CD8-positive, alpha-beta memory T cell (primary cell): ENCODE measurements at regions of chr19 and their contacts with region 1.

Region 1: GRCh38 chr19:17703824-17704463 is 15.3 kb upstream of the MAP1S start:
- DNase-seq: peak; percentile 59 to 75 (median 66)
- H3K4me3 ChIP-seq: no peak overlapping the region
- H3K4me3 Mint-ChIP-seq: no peak overlapping the region
- H3K27ac ChIP-seq: no peak overlapping the region
- H3K27ac Mint-ChIP-seq: peak overlapping the region in 1 of 8 donors; percentile 29
- H3K4me1 ChIP-seq: no peaks in the 10 kb centered on the region
- H3K4me1 Mint-ChIP-seq: peaks cover 0 to 4% (median 2%) of the 10 kb centered on the region in 3 donors
- H3K27me3 ChIP-seq: peaks cover 2% of the 10 kb centered on the region
- H3K27me3 Mint-ChIP-seq: peaks cover 3 to 16% of the 10 kb centered on the region in 2 donors

Region 2: DNA sequence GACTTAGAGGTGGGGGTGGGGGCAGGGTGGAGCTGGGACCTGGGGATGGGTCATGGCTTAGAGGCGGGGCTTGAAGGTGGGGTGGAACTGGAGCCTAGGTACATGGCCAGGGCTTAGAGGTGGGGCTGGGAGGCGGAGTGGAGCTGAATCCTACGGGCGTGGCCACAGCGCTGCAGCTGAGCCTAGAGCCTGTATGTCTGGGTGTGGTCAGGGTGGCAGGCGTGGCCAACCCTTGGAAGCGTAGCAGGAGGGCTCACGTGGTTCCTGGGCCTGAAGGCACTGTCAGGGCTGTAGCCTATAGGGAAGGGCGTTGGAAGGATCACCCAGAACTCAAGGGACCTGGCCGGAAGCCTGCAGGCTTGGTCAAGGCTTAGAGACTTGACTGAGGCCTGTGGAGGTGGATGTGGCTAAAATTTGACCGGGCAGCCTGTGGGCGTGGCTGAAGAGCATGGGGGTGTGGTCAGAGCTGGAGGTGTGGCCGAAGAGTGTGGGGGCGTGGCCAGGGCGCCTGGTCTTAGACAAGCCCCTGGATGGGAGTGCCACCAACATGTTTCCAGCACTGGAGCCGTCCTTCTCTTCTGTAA is 124.2 kb before region 1 on chr19:
- CTCF ChIA-PET with region 1: no interaction called
- POLR2A ChIA-PET with region 1: no interaction called
- DNase-seq: no peak
- H3K4me3 ChIP-seq: no peak overlapping the region
- H3K4me3 Mint-ChIP-seq: no peak overlapping the region
- H3K27ac ChIP-seq: no peak overlapping the region
- H3K27ac Mint-ChIP-seq: no peak overlapping the region
- H3K4me1 ChIP-seq: no peaks in the 10 kb centered on the region
- H3K4me1 Mint-ChIP-seq: no peaks in the 10 kb centered on the region
- H3K27me3 ChIP-seq: no peaks in the 10 kb centered on the region
- H3K27me3 Mint-ChIP-seq: no peaks in the 10 kb centered on the region

Region 3: GRCh38 chr19:17766543-17767131 is 62.7 kb after region 1 on chr19:
- CTCF ChIA-PET with region 1: interaction called, 10 read pairs
- POLR2A ChIA-PET with region 1: no interaction called
- DNase-seq: peak in 1 of 5 donors; percentile 33
- H3K4me3 ChIP-seq: no peak overlapping the region
- H3K4me3 Mint-ChIP-seq: no peak overlapping the region
- H3K27ac ChIP-seq: no peak overlapping the region
- H3K27ac Mint-ChIP-seq: no peak overlapping the region
- H3K4me1 ChIP-seq: no peaks in the 10 kb centered on the region
- H3K4me1 Mint-ChIP-seq: no peaks in the 10 kb centered on the region
- H3K27me3 ChIP-seq: no peaks in the 10 kb centered on the region
- H3K27me3 Mint-ChIP-seq: no peaks in the 10 kb centered on the region

Region 4: DNA sequence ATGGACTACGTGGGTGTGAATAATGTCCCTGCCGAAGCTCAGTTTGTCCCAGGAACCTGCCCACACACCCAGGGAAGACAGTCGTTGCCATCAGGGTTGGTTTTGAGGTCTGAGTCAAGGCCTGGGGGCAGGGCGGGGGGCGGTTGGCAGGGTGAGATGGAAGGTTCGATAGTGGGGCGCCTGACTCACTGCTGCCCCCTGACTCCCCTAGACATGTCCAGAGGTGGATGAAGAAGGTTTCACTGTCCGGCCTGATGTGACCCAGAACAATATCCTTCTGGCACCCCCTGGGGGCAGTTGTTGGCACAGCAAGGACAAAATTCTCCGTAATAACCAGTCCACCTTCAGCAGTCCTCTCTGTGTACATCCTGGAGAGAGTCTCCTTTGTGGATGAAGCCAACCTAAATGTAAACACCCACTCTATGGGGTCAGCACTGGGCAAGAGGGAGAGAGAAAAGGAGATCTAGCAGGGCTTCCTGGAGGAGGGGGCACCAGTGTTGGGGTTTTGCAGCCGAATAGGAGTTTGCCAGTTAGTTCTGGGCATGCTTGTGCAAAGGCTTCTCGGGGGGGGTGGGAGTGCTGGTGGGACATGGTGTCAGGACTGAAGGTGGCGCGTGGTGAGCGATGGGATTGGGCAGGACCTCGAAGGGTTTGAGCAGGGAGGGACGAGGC is 71.4 kb after region 1 on chr19:
- CTCF ChIA-PET with region 1: interaction called, 23 read pairs
- POLR2A ChIA-PET with region 1: no interaction called
- DNase-seq: peak in 1 of 5 donors; percentile 26
- H3K4me3 ChIP-seq: no peak overlapping the region
- H3K4me3 Mint-ChIP-seq: peak overlapping the region in 1 of 7 donors; percentile 54
- H3K27ac ChIP-seq: no peak overlapping the region
- H3K27ac Mint-ChIP-seq: peak overlapping the region in 2 of 8 donors; percentile 55 to 80
- H3K4me1 ChIP-seq: no peaks in the 10 kb centered on the region
- H3K4me1 Mint-ChIP-seq: peaks cover 0 to 9% (median 5%) of the 10 kb centered on the region in 3 donors
- H3K27me3 ChIP-seq: no peaks in the 10 kb centered on the region
- H3K27me3 Mint-ChIP-seq: peaks cover 0 to 3% of the 10 kb centered on the region in 2 donors

Region 5: DNA sequence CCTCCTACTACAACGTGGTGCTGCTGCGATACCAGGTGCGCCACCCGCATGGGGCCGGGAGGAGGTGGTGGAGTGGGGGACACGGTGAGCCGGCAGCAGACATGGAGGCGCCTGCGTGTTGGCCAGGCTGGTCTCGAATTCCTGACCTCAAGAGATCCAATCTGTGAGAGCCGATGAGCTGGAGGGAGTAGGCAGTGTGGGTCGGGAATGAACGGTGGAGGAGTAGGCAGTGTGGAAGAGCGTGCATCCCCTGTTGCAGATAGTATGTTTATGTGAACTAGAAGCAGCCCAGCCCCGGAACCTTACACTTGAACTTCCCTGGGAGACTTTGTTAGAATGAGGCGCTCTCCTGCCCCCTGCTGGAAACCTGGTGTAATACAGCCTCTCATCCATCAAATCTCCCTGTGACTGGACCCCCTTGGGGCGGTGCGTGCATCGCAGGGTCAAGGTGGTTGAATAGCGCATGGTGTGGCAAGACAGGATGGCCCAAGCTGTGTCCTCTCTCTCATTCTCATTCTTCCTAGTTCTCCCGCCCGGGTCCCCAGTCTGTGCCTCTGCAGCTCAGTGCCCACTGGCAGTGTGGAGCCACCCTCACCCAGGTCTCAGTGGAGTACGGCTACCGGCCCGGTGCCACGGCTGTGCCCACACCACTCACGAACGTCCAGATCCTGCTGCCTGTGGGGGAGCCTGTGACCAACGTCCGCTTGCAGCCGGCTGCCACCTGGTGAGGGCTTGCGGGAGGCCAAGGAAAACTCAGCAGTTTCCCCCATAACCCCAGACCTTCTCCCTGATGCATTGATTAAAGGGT is 80.5 kb after region 1 on chr19:
- CTCF ChIA-PET with region 1: interaction called, 21 read pairs
- POLR2A ChIA-PET with region 1: no interaction called
- DNase-seq: peak; percentile 51 to 79 (median 62)
- H3K4me3 ChIP-seq: no peak overlapping the region
- H3K4me3 Mint-ChIP-seq: no peak overlapping the region
- H3K27ac ChIP-seq: no peak overlapping the region
- H3K27ac Mint-ChIP-seq: peak overlapping the region in 3 of 8 donors; percentile 44 to 68 (median 66)
- H3K4me1 ChIP-seq: peaks cover 8% of the 10 kb centered on the region
- H3K4me1 Mint-ChIP-seq: peaks cover 2 to 14% (median 10%) of the 10 kb centered on the region in 3 donors
- H3K27me3 ChIP-seq: no peaks in the 10 kb centered on the region
- H3K27me3 Mint-ChIP-seq: peaks cover 0 to 1% of the 10 kb centered on the region in 2 donors

Region 6: DNA sequence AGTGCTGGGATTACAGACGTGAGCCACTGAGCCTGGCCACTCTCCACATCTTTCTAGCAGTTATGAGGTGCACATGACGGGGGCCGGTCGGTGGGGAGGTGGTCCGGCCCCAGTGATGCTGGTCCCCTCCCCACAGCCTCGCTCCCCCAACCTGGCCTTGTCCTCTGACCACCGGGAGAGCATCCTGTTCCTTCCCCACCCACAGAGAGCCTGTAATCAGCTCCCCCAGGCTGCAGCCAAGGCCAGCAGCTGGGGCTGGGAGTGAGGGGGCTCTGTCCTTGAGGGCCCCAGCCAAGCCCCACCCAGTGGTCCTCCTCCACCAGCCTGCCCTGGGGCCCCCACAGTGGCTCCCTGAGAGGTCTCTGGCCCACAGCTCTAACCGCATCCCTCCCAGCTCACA is 120.4 kb after region 1 on chr19:
- CTCF ChIA-PET with region 1: no interaction called
- POLR2A ChIA-PET with region 1: no interaction called
- DNase-seq: no peak
- H3K4me3 ChIP-seq: no peak overlapping the region
- H3K4me3 Mint-ChIP-seq: no peak overlapping the region
- H3K27ac ChIP-seq: no peak overlapping the region
- H3K27ac Mint-ChIP-seq: peak overlapping the region in 3 of 8 donors; percentile 13 to 70 (median 51)
- H3K4me1 ChIP-seq: no peaks in the 10 kb centered on the region
- H3K4me1 Mint-ChIP-seq: peaks cover 0 to 4% (median 0%) of the 10 kb centered on the region in 3 donors
- H3K27me3 ChIP-seq: no peaks in the 10 kb centered on the region
- H3K27me3 Mint-ChIP-seq: peaks cover 0 to 2% of the 10 kb centered on the region in 2 donors